ENCODE measurements at regions of chr13 and their contacts with region 1.

Region 1: DNA sequence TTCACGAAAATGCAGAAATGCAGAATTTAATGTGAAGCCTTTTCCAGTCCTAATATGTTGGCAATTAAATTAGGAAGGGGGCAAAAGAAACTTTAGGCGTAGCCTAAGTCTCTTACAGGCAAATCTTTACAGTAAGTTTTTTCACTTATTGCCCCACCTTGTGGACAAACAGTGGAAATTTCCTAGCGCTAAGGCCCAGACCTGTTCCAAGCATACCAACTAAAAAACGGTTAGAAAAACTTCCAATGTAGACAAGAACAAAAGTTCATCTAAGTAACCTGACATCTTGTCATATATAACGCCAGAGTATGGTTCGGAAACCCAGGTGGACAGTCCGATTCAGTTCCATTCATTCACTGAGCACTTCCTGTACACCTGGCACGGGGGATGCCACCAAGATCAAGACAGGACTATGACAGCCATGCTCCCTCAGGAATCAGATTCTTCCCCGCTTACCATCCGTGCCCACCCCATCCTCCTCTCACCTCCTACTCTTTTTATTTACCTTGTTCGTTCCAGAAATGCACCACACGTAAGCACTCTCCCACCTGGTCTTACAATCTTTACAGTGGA is 4.9 kb downstream of the ZAR1L start:
- DNase-seq: no peak
- ATAC-seq: peak; percentile 82

Region 2: DNA sequence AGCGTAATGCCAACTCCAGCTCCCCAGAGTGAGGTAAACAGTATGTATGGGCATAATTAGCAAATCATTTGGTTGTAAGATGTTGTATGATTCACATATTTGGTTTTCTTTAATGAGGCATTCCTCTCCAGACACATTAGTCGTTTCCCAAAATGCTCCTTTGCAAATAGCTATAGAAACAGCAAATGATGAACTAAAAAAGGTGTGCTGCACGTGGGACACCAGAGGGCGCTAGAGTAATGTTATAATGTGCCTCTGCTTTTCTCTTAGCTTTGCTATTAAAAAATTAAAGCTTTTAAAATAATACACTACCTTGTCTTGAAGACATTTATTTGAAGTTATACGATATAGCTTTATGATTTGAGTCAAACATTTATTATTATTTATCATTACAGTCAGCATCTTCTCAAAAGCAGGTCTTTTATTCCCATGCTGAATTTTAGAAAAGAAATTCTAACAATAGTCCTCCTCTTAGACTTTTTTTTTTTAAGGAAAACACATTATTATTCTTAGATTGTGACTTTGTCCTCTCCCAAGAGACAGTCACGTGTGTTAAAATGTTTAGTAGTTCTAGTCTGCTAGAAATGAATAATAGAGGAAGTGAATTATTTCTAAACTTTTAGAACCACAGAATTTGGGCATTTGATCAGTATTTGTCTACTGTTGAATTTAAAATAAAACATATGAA is 400.2 kb before region 1 on chr13:
- intact Hi-C with region 1: loop called in 1 of 2 experiments (anchors 2 kb)
- DNase-seq: peak in 1 of 2 donors; percentile 51
- ATAC-seq: peak; percentile 66

Region 3: GRCh38 chr13:31930901-31931522 is 379.2 kb before region 1 on chr13:
- intact Hi-C with region 1: no loop called
- DNase-seq: no peak
- ATAC-seq: peak; percentile 29

Region 4: GRCh38 chr13:32019612-32020233 is 290.5 kb before region 1 on chr13:
- intact Hi-C with region 1: loop called in 1 of 2 experiments (anchors 5 kb)
- DNase-seq: peak in 1 of 2 donors; percentile 41
- ATAC-seq: peak; percentile 61

Region 5: GRCh38 chr13:32246468-32246867 is 63.8 kb before region 1 on chr13:
- intact Hi-C with region 1: loop called in 1 of 2 experiments (anchors 2 kb)
- DNase-seq: peak; percentile 38 to 64
- ATAC-seq: peak; percentile 95

Region 6: DNA sequence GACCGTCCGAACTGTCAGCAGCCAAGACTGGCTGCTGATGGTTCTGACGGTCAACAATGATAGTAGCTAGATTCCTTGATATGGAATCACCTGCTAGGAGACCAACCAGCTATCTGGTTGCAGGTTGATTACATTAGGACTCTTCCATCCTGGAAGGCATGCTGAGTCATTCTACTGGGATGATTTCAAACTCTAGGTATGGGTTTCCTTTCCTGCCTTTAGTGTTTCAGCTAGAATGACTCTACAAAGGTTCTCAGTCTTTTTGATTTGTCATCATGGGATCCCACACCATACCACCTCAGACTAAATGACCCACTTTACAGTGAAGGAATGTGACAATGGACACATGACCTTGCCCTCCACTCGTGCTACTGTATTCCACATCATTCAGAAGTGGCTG is 568.0 kb after region 1 on chr13:
- intact Hi-C with region 1: no loop called
- DNase-seq: no peak
- ATAC-seq: no peak